T-cell (primary cell): ENCODE measurements at regions of chr9 and their contacts with region 1.

Region 1: GRCh38 chr9:3398232-3398648 is 127.6 kb downstream of the RFX3 start:
- DNase-seq: peak in 9 of 35 experiments; percentile 0 to 32 (median 3)
- ATAC-seq: peak; percentile 50 to 87 (median 60)
- H3K4me3 ChIP-seq: peak overlapping the region in 1 of 2 donors; percentile 44
- H3K4me3 Mint-ChIP-seq: peak overlapping the region; percentile 57 to 63 (median 58)
- H3K27ac ChIP-seq: peak overlapping the region; percentile 44
- H3K27ac Mint-ChIP-seq: peak overlapping the region; percentile 92 to 94
- H3K4me1 ChIP-seq: peaks cover 3 to 11% of the 10 kb centered on the region in 2 experiments
- H3K4me1 Mint-ChIP-seq: peaks cover 31 to 38% (median 37%) of the 10 kb centered on the region in 3 donors
- H3K27me3 ChIP-seq: no peaks in the 10 kb centered on the region
- H3K27me3 Mint-ChIP-seq: no peaks in the 10 kb centered on the region

Region 2: DNA sequence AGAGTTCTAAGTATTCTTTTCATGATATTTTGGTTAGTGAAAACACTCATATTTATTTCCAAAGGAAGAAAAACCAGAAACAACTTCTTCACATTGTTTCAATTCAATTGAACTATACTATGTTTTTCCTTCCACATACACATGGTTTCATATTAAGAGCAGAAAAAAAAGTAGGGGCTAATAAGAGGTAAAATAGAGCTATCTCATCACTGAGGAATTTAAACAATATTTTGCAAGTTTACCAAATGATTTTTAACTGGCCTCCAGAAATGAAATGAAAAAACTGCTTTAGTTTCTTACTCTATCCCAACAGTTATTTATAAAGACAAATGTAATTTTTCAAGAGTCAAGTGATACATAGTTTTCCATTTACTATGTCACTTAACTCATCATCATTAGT is 105.9 kb before region 1 on chr9:
- CTCF ChIA-PET with region 1: no interaction called
- POLR2A ChIA-PET with region 1: interaction called in 1 of 2 experiments, 13 read pairs
- DNase-seq: no peak
- ATAC-seq: no peak
- H3K4me3 ChIP-seq: no peak overlapping the region
- H3K4me3 Mint-ChIP-seq: no peak overlapping the region
- H3K27ac ChIP-seq: no peak overlapping the region
- H3K27ac Mint-ChIP-seq: no peak overlapping the region
- H3K4me1 ChIP-seq: no peaks in the 10 kb centered on the region
- H3K4me1 Mint-ChIP-seq: no peaks in the 10 kb centered on the region
- H3K27me3 ChIP-seq: no peaks in the 10 kb centered on the region
- H3K27me3 Mint-ChIP-seq: no peaks in the 10 kb centered on the region

Region 3: GRCh38 chr9:3385871-3386270 is 12.4 kb before region 1 on chr9:
- CTCF ChIA-PET with region 1: no interaction called
- POLR2A ChIA-PET with region 1: interaction called, 4 to 14 read pairs
- DNase-seq: no peak
- ATAC-seq: peak in 3 of 4 experiments; percentile 60 to 61 (median 60)
- H3K4me3 ChIP-seq: no peak overlapping the region
- H3K4me3 Mint-ChIP-seq: no peak overlapping the region
- H3K27ac ChIP-seq: no peak overlapping the region
- H3K27ac Mint-ChIP-seq: peak overlapping the region in 1 of 2 donors; percentile 57
- H3K4me1 ChIP-seq: no peaks in the 10 kb centered on the region
- H3K4me1 Mint-ChIP-seq: peaks cover 24 to 42% (median 29%) of the 10 kb centered on the region in 3 donors
- H3K27me3 ChIP-seq: no peaks in the 10 kb centered on the region
- H3K27me3 Mint-ChIP-seq: no peaks in the 10 kb centered on the region